Activated CD4-positive, alpha-beta T cell treated with anti-CD3 and anti-CD28 coated beads, Interleukin-2, amount 10 ng/mL, durations not matched to agents 7 days and 5 days (primary cell): ENCODE measurements at regions of chr5 and their contacts with region 1.

Region 1: GRCh38 chr5:149422366-149423048 is 43.4 kb upstream of the IL17B start:
- DNase-seq: no peak
- H3K4me3 Mint-ChIP-seq: no peak overlapping the region
- H3K27ac Mint-ChIP-seq: no peak overlapping the region
- H3K4me1 Mint-ChIP-seq: peaks cover 12% of the 10 kb centered on the region
- H3K27me3 Mint-ChIP-seq: no peaks in the 10 kb centered on the region

Region 2: GRCh38 chr5:149442563-149443182 is 20.2 kb after region 1 on chr5:
- CTCF ChIA-PET with region 1: interaction called, 21 read pairs
- POLR2A ChIA-PET with region 1: no interaction called
- DNase-seq: peak; percentile 70
- H3K4me3 Mint-ChIP-seq: no peak overlapping the region
- H3K27ac Mint-ChIP-seq: no peak overlapping the region
- H3K4me1 Mint-ChIP-seq: peaks cover 14% of the 10 kb centered on the region
- H3K27me3 Mint-ChIP-seq: no peaks in the 10 kb centered on the region

Region 3: GRCh38 chr5:149471406-149472183 is 49.1 kb after region 1 on chr5:
- CTCF ChIA-PET with region 1: no interaction called
- POLR2A ChIA-PET with region 1: no interaction called
- DNase-seq: no peak
- H3K4me3 Mint-ChIP-seq: no peak overlapping the region
- H3K27ac Mint-ChIP-seq: no peak overlapping the region
- H3K4me1 Mint-ChIP-seq: no peaks in the 10 kb centered on the region
- H3K27me3 Mint-ChIP-seq: no peaks in the 10 kb centered on the region